PC-9 (cell line): ENCODE measurements at regions of chr9 and their contacts with region 1.

Region 1: DNA sequence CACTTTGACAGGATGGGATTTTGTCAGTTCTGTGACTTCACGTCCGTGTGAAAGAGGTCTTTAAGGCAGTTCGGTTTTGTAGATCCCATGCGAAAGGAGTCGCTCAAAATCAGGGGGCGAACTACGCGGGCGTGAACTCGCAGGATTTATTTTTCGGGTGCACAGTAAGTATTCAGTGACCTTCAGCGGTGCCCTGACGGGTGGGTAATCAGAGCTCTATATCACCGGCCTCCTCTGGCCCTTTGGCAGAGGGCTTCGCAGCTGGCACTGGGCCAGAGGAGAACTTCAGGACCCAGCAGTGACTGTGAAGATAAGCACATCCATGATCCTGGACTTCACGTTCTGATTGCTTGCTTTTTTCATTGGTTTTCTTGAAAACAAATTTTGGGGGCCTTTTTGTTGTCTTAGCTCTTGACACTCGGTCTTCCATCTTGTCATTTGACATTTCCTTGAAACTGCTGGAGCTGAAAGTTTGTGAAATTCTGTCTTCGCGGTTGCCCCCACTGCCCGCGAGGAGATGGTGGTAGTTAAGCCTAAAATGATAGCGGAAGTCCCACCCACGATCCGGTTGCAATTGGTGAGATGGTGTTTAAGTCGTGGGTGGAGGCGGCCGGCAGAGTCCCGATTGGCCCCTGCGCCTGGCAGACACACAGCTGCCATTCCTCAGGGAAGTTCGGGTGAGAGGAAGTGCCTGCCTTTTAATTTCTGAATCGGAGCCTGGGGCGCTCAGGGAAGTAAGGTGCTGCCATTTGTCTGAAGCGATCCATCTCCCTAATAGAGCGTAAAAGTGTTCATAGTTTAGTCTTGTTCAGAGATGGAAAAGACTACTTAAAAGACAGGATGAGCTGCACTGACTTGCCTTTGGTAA is at the start of gene FAM120AOS:
- DNase-seq: peak; percentile 93 to 94
- H3K4me3 ChIP-seq: peak within 1 kb of the TSS; percentile 74
- H3K27ac ChIP-seq: peak within 1 kb of the TSS; percentile 42
- H3K4me1 ChIP-seq: peaks cover 31% of the 10 kb centered on the region
- H3K27me3 ChIP-seq: no peaks in the 10 kb centered on the region
- CTCF ChIP-seq: no peak
- total RNA-seq, gene FAM120AOS: 27.8 and 34.6 TPM in 2 replicates

Region 2: GRCh38 chr9:93159601-93160471 is 293.4 kb before region 1 on chr9:
- CTCF ChIA-PET with region 1: interaction called, 5 read pairs
- POLR2A ChIA-PET with region 1: no interaction called
- intact Hi-C with region 1: loop called (anchors 2 kb)
- DNase-seq: peak; percentile 60 to 95
- H3K4me3 ChIP-seq: no peak overlapping the region
- H3K27ac ChIP-seq: no peak overlapping the region
- H3K4me1 ChIP-seq: no peaks in the 10 kb centered on the region; the same call in 1 of the 2 replicates
- H3K27me3 ChIP-seq: no peaks in the 10 kb centered on the region
- CTCF ChIP-seq: peak; percentile 98

Region 3: GRCh38 chr9:93217706-93218105 is 235.6 kb before region 1 on chr9:
- CTCF ChIA-PET with region 1: no interaction called
- POLR2A ChIA-PET with region 1: interaction called, 3 read pairs
- intact Hi-C with region 1: loop called (anchors 5 kb)
- DNase-seq: peak in 1 of 2 experiments; percentile 65
- H3K4me3 ChIP-seq: no peak overlapping the region
- H3K27ac ChIP-seq: no peak overlapping the region
- H3K4me1 ChIP-seq: peaks cover 17% of the 10 kb centered on the region
- H3K27me3 ChIP-seq: no peaks in the 10 kb centered on the region
- CTCF ChIP-seq: no peak

Region 4: DNA sequence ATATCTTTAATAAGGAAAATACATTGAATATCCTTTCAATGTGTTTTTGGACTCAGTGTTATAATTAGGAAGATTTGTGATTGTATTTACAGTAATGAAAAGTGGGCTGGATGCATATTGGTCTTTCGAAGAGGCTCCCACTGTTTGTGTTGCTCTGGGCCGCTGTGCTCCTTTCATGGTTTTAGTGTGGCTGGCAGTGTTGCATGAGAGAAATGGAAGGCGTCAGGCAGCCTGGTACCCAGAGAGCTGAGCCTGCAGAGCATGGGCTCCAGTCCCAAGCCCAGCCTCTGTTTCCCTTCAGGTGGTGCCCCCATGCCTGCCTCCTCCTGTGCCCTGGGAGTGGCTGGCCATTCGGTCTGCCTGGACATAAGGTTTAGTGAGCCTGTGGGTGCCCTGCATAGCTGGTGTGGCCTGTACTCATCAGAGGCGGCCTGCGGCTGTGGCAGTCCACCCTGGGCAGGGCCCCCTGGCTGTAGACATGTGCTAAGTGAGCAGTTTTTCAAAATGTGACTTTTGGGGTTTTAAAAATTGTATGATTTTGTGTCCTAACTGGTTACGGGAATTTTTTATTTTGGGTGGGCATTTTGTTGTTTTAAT is 27.5 kb after region 1 on chr9:
- CTCF ChIA-PET with region 1: interaction called, 3 read pairs
- POLR2A ChIA-PET with region 1: interaction called, 11 read pairs
- intact Hi-C with region 1: no loop called
- DNase-seq: no peak
- H3K4me3 ChIP-seq: no peak overlapping the region
- H3K27ac ChIP-seq: no peak overlapping the region
- H3K4me1 ChIP-seq: peaks cover 3% of the 10 kb centered on the region; the same call in 1 of the 2 replicates
- H3K27me3 ChIP-seq: no peaks in the 10 kb centered on the region
- CTCF ChIP-seq: no peak